GM13977 (cell line): ENCODE measurements at regions of chrX and their contacts with region 1.

Region 1: GRCh38 chrX:103941201-103941975 is 21.0 kb upstream of the TMSB15B start:
- DNase-seq: no peak
- CTCF ChIP-seq: peak; percentile 41

Region 2: DNA sequence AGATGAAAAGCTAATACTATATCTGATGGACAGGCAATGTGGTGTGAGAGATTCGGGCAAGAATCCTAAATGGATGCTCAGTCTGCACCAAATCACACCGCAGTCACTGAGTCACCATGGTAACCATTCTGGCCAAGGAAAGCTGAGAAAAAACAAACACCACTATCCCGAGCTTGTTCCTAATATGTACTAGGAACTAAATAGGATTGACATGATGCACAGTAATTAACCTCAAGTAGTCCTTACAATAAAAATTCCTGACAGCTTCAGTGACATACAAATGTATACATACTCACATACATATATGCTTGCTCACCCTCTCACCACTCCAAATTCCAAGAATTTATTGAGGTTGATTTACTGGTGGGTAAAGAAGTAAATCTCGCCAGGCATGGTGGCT is 421.0 kb before region 1 on chrX:
- in situ Hi-C with region 1: loop called (anchors 25 kb)
- DNase-seq: no peak
- CTCF ChIP-seq: no peak